PC-3 (cell line): ENCODE measurements at regions of chr4 and their contacts with region 1.

Region 1: GRCh38 chr4:103634236-103634635 is 85.5 kb downstream of the TACR3 start:
- DNase-seq: peak; percentile 7
- ATAC-seq: no peak
- H3K4me3 ChIP-seq: no peak overlapping the region
- H3K27ac ChIP-seq: no peak overlapping the region
- H3K4me1 ChIP-seq: no peaks in the 10 kb centered on the region
- H3K27me3 ChIP-seq: no peaks in the 10 kb centered on the region
- CTCF ChIP-seq: peak; percentile 30; the same call in 1 of the 2 replicates

Region 2: GRCh38 chr4:103915224-103915869 is 281.1 kb after region 1 on chr4:
- CTCF ChIA-PET with region 1: interaction called, 3 read pairs
- POLR2A ChIA-PET with region 1: no interaction called
- intact Hi-C with region 1: loop called (anchors 5 kb)
- DNase-seq: peak; percentile 25
- ATAC-seq: no peak
- H3K4me3 ChIP-seq: no peak overlapping the region
- H3K27ac ChIP-seq: no peak overlapping the region
- H3K4me1 ChIP-seq: no peaks in the 10 kb centered on the region
- H3K27me3 ChIP-seq: no peaks in the 10 kb centered on the region
- CTCF ChIP-seq: peak; percentile 65